Activated T-helper 2 cell treated with anti-CD3 and anti-CD28 coated beads, Interferon-gamma antibody, Interleukin-2, Interleukin-4, amounts not matched to agents 10 μg/mL and 5 μg/mL and 100 μg/mL, durations not matched to agents 14 hours and 24 hours and 36 hours (primary cell): ENCODE measurements at regions of chr9 and their contacts with region 1.

Region 1: GRCh38 chr9:89179895-89180667 is 1.5 kb upstream of the SHC3 start:
- DNase-seq: no peak
- H3K4me3 Mint-ChIP-seq: peak overlapping the region; percentile 20
- H3K27ac Mint-ChIP-seq: no peak overlapping the region
- H3K4me1 Mint-ChIP-seq: peaks cover 10% of the 10 kb centered on the region
- H3K27me3 Mint-ChIP-seq: peaks cover 59% of the 10 kb centered on the region

Region 2: DNA sequence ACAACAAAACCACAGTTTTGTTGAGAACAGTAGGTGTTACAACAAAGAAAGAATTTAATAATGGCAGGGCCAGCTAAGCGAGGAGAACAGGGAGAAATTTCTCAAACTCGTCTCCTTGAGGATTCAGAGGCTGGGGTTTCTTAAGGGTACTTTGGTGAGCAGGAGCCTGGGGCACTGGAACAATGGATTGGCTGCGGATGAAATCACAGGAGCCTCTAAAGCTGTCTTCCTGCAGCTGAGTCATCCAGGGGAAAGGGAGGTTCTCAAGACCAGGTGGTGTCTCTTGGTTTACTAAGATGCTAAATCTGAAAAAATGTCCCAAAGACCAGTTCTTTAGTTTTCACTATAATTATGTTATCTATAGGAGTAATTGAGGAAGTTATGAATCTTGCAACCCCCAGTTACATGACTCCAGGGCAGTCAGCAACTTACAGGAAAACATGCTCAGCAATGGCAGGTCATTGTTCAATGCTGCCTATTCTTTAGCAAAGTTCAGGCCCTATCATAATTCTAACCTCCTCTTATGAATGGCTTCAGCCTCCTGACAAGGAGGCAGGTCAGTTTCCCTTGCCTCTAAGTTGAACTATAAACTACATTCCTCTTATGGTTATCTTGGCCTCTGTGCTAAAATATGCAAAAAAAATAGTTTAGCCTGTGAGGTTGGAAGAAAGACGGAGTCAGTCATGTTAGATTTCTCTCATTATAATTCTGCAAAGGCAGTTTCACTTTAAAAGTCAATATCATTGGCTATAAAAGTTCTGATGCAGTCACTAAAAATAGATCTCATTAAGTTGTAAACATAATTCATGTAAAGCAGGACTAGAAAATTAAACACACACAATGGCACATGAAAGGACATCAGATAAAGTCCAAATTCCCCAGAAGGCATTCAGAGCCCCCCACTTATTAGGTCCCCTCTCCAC is 67.6 kb after region 1 on chr9:
- intact Hi-C with region 1: no loop called
- DNase-seq: no peak
- H3K4me3 Mint-ChIP-seq: no peak overlapping the region
- H3K27ac Mint-ChIP-seq: no peak overlapping the region
- H3K4me1 Mint-ChIP-seq: no peaks in the 10 kb centered on the region
- H3K27me3 Mint-ChIP-seq: peaks cover 17% of the 10 kb centered on the region

Region 3: GRCh38 chr9:89278997-89279739 is 99.1 kb after region 1 on chr9:
- intact Hi-C with region 1: loop called (anchors 10 kb)
- DNase-seq: no peak
- H3K4me3 Mint-ChIP-seq: no peak overlapping the region
- H3K27ac Mint-ChIP-seq: no peak overlapping the region
- H3K4me1 Mint-ChIP-seq: peaks cover 23% of the 10 kb centered on the region
- H3K27me3 Mint-ChIP-seq: peaks cover 17% of the 10 kb centered on the region